CD4-positive, alpha-beta memory T cell (primary cell): ENCODE measurements at regions of chr14 and their contacts with region 1.

Region 1: GRCh38 chr14:54420013-54420809 is 21.0 kb downstream of the CNIH1 start:
- DNase-seq: no peak
- H3K4me3 ChIP-seq: no peak overlapping the region
- H3K4me3 Mint-ChIP-seq: no peak overlapping the region
- H3K27ac ChIP-seq: no peak overlapping the region
- H3K27ac Mint-ChIP-seq: peak overlapping the region in 3 of 7 donors; percentile 50 to 64 (median 58)
- H3K4me1 ChIP-seq: no peaks in the 10 kb centered on the region
- H3K4me1 Mint-ChIP-seq: peaks cover 0 to 6% (median under 1%) of the 10 kb centered on the region in 4 donors
- H3K27me3 ChIP-seq: no peaks in the 10 kb centered on the region
- H3K27me3 Mint-ChIP-seq: no peaks in the 10 kb centered on the region

Region 2: GRCh38 chr14:54366736-54367735 is 53.2 kb before region 1 on chr14:
- CTCF ChIA-PET with region 1: no interaction called
- POLR2A ChIA-PET with region 1: no interaction called
- intact Hi-C with region 1: loop called (anchors 1 kb)
- DNase-seq: peak; percentile 12 to 43 (median 22)
- H3K4me3 ChIP-seq: no peak overlapping the region
- H3K4me3 Mint-ChIP-seq: no peak overlapping the region
- H3K27ac ChIP-seq: no peak overlapping the region
- H3K27ac Mint-ChIP-seq: no peak overlapping the region
- H3K4me1 ChIP-seq: no peaks in the 10 kb centered on the region
- H3K4me1 Mint-ChIP-seq: no peaks in the 10 kb centered on the region
- H3K27me3 ChIP-seq: no peaks in the 10 kb centered on the region
- H3K27me3 Mint-ChIP-seq: peaks cover 11 to 15% of the 10 kb centered on the region in 2 donors